ENCODE measurements at regions of chr14 and their contacts with region 1.

Region 1: DNA sequence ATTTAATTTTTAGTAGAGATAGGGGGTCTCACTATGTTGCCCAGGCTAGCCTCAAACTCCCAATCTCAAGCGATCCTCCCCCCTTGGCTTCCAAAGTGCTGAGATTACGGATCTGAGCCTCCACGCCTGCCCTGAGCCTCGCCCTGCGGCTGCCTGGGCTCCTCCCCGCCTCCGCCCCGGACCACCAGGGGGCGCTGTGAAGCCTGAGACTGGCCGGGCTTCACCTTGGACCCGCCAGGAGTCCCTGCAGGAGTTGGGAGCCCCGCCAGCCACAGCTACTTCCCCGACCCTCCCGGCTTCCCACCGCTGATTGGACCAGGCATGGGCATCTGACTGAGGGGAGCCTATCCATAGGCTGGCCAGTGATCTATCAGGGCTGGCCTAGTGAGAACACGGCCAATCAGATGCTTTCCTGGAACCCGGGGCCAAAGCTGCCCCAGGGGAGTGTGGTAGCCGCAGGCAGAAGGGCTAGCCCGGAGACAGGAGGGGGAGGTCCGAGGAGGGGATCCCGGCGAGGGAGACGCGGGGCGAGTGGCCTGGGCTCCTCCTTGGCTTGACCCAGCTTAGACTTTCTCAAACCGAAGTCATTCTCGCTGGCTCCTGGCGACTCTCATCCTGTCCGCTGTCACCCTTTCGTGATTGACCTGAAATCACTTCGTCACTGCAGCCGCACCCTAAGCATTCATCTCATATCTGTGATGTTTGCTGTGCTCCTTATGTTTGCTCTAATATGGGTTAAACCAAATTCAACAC is 15.1 kb upstream of the ANKRD9 start:
- DNase-seq: peak; percentile 93
- H3K4me3 Mint-ChIP-seq: peak overlapping the region; percentile 81
- H3K27ac Mint-ChIP-seq: peak overlapping the region; percentile 87
- H3K4me1 Mint-ChIP-seq: peaks cover 30% of the 10 kb centered on the region
- H3K27me3 Mint-ChIP-seq: no peaks in the 10 kb centered on the region

Region 2: GRCh38 chr14:102509744-102510615 is 14.7 kb before region 1 on chr14 and contains the start of gene ANKRD9:
- CTCF ChIA-PET with region 1: interaction called, 12 read pairs
- POLR2A ChIA-PET with region 1: no interaction called
- DNase-seq: peak; percentile 88
- H3K4me3 Mint-ChIP-seq: peak within 1 kb of the TSS; percentile 76
- H3K27ac Mint-ChIP-seq: peak within 1 kb of the TSS; percentile 66
- H3K4me1 Mint-ChIP-seq: peaks cover 19% of the 10 kb centered on the region
- H3K27me3 Mint-ChIP-seq: peaks cover 2% of the 10 kb centered on the region
- total RNA-seq, gene ANKRD9: 4.9 to 6.2 TPM

Region 3: GRCh38 chr14:102545461-102546265 is 21.0 kb after region 1 on chr14:
- CTCF ChIA-PET with region 1: interaction called, 10 read pairs
- POLR2A ChIA-PET with region 1: no interaction called
- DNase-seq: no peak
- H3K4me3 Mint-ChIP-seq: peak overlapping the region; percentile 17
- H3K27ac Mint-ChIP-seq: no peak overlapping the region
- H3K4me1 Mint-ChIP-seq: peaks cover 6% of the 10 kb centered on the region
- H3K27me3 Mint-ChIP-seq: peaks cover 44% of the 10 kb centered on the region

Region 4: DNA sequence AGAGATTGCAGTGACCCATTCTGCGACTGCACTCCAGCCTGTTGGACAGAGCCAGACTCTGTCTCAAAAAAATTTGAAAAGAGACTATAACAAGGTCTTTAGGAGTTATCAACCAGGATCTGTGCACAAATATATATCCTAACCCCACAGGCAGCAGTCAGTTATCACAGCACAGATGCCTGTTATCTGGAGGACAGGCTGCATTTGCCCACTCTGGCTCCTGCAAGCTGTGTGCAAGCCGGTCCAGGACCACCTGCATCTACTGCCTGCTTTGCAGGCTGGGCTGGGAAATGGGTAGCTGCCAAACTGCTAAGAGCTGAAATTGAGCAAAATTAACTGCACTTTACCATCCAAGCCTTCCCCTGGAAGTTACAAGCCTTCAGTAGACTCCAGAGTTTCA is 46.4 kb after region 1 on chr14:
- CTCF ChIA-PET with region 1: interaction called, 11 read pairs
- POLR2A ChIA-PET with region 1: no interaction called
- DNase-seq: no peak
- H3K4me3 Mint-ChIP-seq: no peak overlapping the region
- H3K27ac Mint-ChIP-seq: no peak overlapping the region
- H3K4me1 Mint-ChIP-seq: peaks cover 16% of the 10 kb centered on the region
- H3K27me3 Mint-ChIP-seq: no peaks in the 10 kb centered on the region

Measured in activated CD4-positive, alpha-beta T cell treated with anti-CD3 and anti-CD28 coated beads, Interleukin-2, amount 10 ng/mL, durations not matched to agents 7 days and 5 days (primary cell).